ENCODE measurements at regions of chr6 and their contacts with region 1.

Region 1: DNA sequence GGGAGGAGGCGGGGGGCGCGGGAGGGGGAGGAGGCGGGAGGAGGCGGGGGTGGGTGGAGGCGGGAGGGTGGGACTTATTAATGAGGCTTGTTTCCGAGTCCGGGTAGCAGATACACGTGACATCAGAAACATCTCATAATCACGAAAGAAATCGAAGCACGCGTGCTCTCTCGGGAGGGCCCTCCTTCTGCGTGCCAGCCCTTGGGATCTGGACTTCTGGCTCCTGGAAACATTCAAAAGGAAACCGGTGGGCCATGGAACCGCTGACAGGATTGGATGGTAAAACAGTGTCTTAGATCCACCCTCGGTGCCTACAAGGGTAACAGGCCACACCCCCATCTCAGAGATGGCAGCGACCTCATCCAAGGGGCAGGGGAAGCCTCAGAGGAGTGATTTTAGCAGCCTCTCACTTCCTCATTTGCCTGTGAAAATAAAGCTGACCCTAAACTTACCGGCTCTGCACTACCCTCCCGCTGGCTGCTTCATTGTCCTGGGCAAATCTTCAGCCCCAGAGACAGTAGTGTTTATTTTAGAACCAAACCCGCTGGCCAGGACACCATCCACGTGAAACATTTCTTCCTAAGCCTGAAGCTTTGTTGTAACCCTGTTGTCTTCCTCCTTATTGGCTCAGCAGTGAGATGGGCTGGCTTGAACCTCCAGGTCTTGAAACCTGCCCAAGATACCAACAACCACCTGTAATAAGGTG is 97.5 kb downstream of the PSMG4 start:
- DNase-seq: peak; percentile 65 to 84 (median 78)
- H3K4me3 ChIP-seq: peak overlapping the region; percentile 14 to 59
- H3K4me3 Mint-ChIP-seq: peak overlapping the region; percentile 86 to 93 (median 88)
- H3K27ac ChIP-seq: peak overlapping the region; percentile 57
- H3K27ac Mint-ChIP-seq: peak overlapping the region; percentile 94 to 98 (median 97)
- H3K4me1 ChIP-seq: peaks cover 36% of the 10 kb centered on the region
- H3K4me1 Mint-ChIP-seq: peaks cover 33 to 58% (median 42%) of the 10 kb centered on the region in 4 donors
- H3K27me3 ChIP-seq: no peaks in the 10 kb centered on the region
- H3K27me3 Mint-ChIP-seq: peaks cover 1 to 4% of the 10 kb centered on the region in 2 donors

Region 2: GRCh38 chr6:3118353-3119039 is 237.7 kb before region 1 on chr6 and contains the start of gene BPHL:
- CTCF ChIA-PET with region 1: no interaction called
- POLR2A ChIA-PET with region 1: no interaction called
- intact Hi-C with region 1: loop called (anchors 1 kb)
- DNase-seq: peak; percentile 98 to 100 (median 99)
- H3K4me3 ChIP-seq: peak within 1 kb of the TSS; percentile 76 to 94
- H3K4me3 Mint-ChIP-seq: peak within 1 kb of the TSS; percentile 75 to 96 (median 91)
- H3K27ac ChIP-seq: peak within 1 kb of the TSS; percentile 87
- H3K27ac Mint-ChIP-seq: peak within 1 kb of the TSS; percentile 93 to 97 (median 96)
- H3K4me1 ChIP-seq: peaks cover 14% of the 10 kb centered on the region
- H3K4me1 Mint-ChIP-seq: peaks cover 7 to 20% (median 14%) of the 10 kb centered on the region in 4 donors
- H3K27me3 ChIP-seq: no peaks in the 10 kb centered on the region
- H3K27me3 Mint-ChIP-seq: no peaks in the 10 kb centered on the region
- total RNA-seq, gene BPHL: 11.9 to 13.7 TPM

Region 3: GRCh38 chr6:3258720-3259490 is 97.3 kb before region 1 on chr6 and contains the start of gene PSMG4:
- CTCF ChIA-PET with region 1: no interaction called
- POLR2A ChIA-PET with region 1: no interaction called
- intact Hi-C with region 1: loop called (anchors 2 kb)
- DNase-seq: peak; percentile 87 to 92 (median 88)
- H3K4me3 ChIP-seq: peak within 1 kb of the TSS; percentile 44 to 67
- H3K4me3 Mint-ChIP-seq: peak within 1 kb of the TSS; percentile 93 to 99 (median 96)
- H3K27ac ChIP-seq: peak within 1 kb of the TSS; percentile 70
- H3K27ac Mint-ChIP-seq: peak within 1 kb of the TSS; percentile 92 to 99 (median 95)
- H3K4me1 ChIP-seq: peaks cover 45% of the 10 kb centered on the region
- H3K4me1 Mint-ChIP-seq: peaks cover 21 to 49% (median 37%) of the 10 kb centered on the region in 4 donors
- H3K27me3 ChIP-seq: no peaks in the 10 kb centered on the region
- H3K27me3 Mint-ChIP-seq: no peaks in the 10 kb centered on the region
- total RNA-seq, gene PSMG4: 41.0 to 41.6 TPM

Region 4: GRCh38 chr6:3370361-3371219 is 14.4 kb after region 1 on chr6:
- CTCF ChIA-PET with region 1: interaction called, 3 read pairs
- POLR2A ChIA-PET with region 1: interaction called, 8 read pairs
- intact Hi-C with region 1: loop called (anchors 1 kb)
- DNase-seq: peak; percentile 70 to 82 (median 72)
- H3K4me3 ChIP-seq: no peak overlapping the region
- H3K4me3 Mint-ChIP-seq: peak overlapping the region; percentile 1 to 67 (median 62)
- H3K27ac ChIP-seq: peak overlapping the region; percentile 51
- H3K27ac Mint-ChIP-seq: peak overlapping the region; percentile 86 to 98 (median 93)
- H3K4me1 ChIP-seq: peaks cover 34% of the 10 kb centered on the region
- H3K4me1 Mint-ChIP-seq: peaks cover 35 to 62% (median 38%) of the 10 kb centered on the region in 4 donors
- H3K27me3 ChIP-seq: no peaks in the 10 kb centered on the region
- H3K27me3 Mint-ChIP-seq: no peaks in the 10 kb centered on the region

Region 5: DNA sequence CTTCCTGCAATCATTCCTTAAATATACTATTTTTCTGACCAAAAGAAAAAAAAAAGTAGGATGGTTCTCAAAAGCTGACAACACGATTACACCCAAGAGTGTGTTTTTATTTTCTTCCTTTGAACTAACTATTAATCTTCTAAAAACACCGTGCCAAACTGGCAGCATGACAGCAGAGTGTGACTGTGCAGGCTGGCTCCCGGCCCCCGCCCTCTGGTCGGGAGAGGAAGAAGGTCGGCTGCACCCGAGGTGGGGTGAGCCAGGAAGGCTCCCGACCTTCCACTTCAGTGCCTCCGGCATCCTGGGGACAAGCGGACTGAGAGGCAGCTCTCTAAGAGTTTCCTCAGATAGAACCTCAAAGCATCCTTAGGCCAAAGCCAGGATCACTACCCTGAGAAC is 71.5 kb after region 1 on chr6:
- CTCF ChIA-PET with region 1: no interaction called
- POLR2A ChIA-PET with region 1: no interaction called
- intact Hi-C with region 1: no loop called
- DNase-seq: no peak
- H3K4me3 ChIP-seq: no peak overlapping the region
- H3K4me3 Mint-ChIP-seq: no peak overlapping the region
- H3K27ac ChIP-seq: no peak overlapping the region
- H3K27ac Mint-ChIP-seq: no peak overlapping the region
- H3K4me1 ChIP-seq: no peaks in the 10 kb centered on the region
- H3K4me1 Mint-ChIP-seq: peaks cover 0 to 3% (median 0%) of the 10 kb centered on the region in 4 donors
- H3K27me3 ChIP-seq: no peaks in the 10 kb centered on the region
- H3K27me3 Mint-ChIP-seq: peaks cover 0 to 2% of the 10 kb centered on the region in 2 donors

Region 6: GRCh38 chr6:4135665-4136353 is 779.6 kb after region 1 on chr6:
- CTCF ChIA-PET with region 1: no interaction called
- POLR2A ChIA-PET with region 1: interaction called, 6 read pairs
- intact Hi-C with region 1: loop called (anchors 5 kb)
- DNase-seq: peak; percentile 86 to 93 (median 87)
- H3K4me3 ChIP-seq: peak overlapping the region; percentile 43 to 72
- H3K4me3 Mint-ChIP-seq: peak overlapping the region; percentile 83 to 94 (median 88)
- H3K27ac ChIP-seq: peak overlapping the region; percentile 51
- H3K27ac Mint-ChIP-seq: peak overlapping the region; percentile 71 to 93 (median 92)
- H3K4me1 ChIP-seq: peaks cover 28% of the 10 kb centered on the region
- H3K4me1 Mint-ChIP-seq: peaks cover 21 to 50% (median 36%) of the 10 kb centered on the region in 4 donors
- H3K27me3 ChIP-seq: no peaks in the 10 kb centered on the region
- H3K27me3 Mint-ChIP-seq: no peaks in the 10 kb centered on the region

Region 7: DNA sequence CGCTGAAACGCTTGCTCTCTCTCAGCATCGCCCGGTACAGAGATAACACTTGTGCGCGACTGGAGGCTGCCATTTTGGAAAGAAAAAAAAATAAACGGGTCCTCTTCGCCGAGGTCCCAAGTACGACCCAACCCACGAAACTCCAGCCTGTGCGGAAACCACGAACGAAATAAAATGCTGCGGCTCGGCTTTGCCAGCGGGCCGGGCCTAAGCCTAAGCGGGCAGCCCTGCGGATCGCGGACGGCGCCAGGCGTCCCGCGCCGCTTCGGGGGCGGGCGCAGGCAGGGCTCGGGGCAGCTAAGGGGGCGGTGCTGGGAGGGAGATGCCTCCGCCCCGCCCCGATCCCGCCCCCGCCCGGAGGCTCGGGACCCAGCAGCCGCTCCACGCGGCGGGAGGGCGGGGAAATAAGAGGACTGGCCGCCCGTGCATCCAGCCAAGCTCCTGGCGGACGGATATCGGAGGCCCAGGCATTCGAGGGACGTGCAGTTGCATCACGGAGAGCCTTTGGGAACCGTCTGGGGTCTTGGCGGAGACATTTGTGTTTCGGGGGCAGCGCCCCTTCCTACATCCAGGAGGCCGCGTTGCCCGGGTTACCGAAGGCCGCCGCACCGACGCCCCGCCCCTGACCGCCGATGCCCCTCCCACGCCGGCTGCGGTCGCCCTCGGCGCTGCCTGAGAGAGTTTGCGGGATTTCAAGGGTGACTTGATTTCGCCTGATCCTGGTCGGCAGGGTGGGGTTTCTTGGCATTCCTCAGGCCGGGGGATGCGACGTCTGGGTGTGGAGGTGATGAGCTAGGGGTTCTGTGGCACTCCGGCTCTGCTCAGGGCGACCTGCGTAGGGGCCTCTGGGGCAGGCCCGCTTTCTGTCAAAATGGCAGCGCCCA is 1904.7 kb after region 1 on chr6 and contains the starts of genes FARS2 and LYRM4:
- CTCF ChIA-PET with region 1: no interaction called
- POLR2A ChIA-PET with region 1: no interaction called
- intact Hi-C with region 1: loop called (anchors 5 kb)
- DNase-seq: peak; percentile 90 to 99 (median 96)
- H3K4me3 ChIP-seq: peak within 1 kb of the TSS; percentile 95 to 96
- H3K4me3 Mint-ChIP-seq: peak within 1 kb of the TSS; percentile 96 to 99 (median 99)
- H3K27ac ChIP-seq: peak within 1 kb of the TSS; percentile 95
- H3K27ac Mint-ChIP-seq: peak within 1 kb of the TSS; percentile 99 to 100 (median 100)
- H3K4me1 ChIP-seq: peaks cover 21% of the 10 kb centered on the region
- H3K4me1 Mint-ChIP-seq: peaks cover 18 to 40% (median 27%) of the 10 kb centered on the region in 4 donors
- H3K27me3 ChIP-seq: no peaks in the 10 kb centered on the region
- H3K27me3 Mint-ChIP-seq: no peaks in the 10 kb centered on the region
- total RNA-seq, gene FARS2: 15.6 to 19.2 TPM
- total RNA-seq, gene LYRM4: 10.6 to 14.3 TPM